Activated CD4-positive, alpha-beta T cell treated with anti-CD3 and anti-CD28 coated beads for 36 hours (primary cell): ENCODE measurements at regions of chr5 and their contacts with region 1.

Region 1: DNA sequence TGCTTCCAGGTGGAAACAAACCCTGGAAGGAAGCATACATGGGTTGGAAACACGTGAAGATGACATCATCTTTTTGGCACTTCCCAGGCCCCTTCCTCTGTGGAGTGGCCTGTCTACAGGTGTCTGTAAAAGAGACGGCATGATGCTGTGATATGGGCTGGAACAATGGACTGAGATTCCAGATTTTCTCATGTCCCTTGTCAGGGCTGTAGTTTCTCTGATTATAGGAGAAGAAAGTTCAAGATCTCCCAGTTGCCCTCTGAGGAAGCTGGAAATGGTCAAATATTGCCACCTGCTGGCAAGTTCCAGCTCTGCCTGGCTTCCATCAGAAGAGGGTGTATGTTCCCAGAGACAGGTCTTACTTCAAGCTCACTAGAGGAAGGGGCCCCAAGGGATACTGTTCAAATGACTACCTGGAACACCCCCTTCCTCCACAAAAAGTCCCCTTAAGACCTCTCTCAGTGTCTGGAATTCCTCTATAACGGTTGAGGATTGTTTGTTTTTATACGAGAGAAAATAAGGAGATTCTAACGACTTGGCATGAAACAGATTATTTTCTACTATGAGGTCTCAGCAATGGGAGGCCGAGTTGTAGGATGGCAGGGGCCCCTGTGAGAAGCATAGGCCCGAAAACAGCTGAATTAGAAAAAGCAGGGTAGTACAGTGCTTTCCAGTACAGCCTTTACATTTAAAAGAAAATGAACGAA is 7.3 kb upstream of the ANXA6 start:
- DNase-seq: peak; percentile 88
- ATAC-seq: peak; percentile 98
- H3K4me3 Mint-ChIP-seq: no peak overlapping the region
- H3K27ac Mint-ChIP-seq: no peak overlapping the region
- H3K4me1 Mint-ChIP-seq: peaks cover 14% of the 10 kb centered on the region
- H3K27me3 Mint-ChIP-seq: no peaks in the 10 kb centered on the region

Region 2: GRCh38 chr5:150560401-150561193 is 604.2 kb before region 1 on chr5:
- CTCF ChIA-PET with region 1: no interaction called
- POLR2A ChIA-PET with region 1: no interaction called
- intact Hi-C with region 1: loop called in 1 of 2 experiments (anchors 2 kb)
- DNase-seq: peak; percentile 92
- ATAC-seq: peak; percentile 97
- H3K4me3 Mint-ChIP-seq: no peak overlapping the region
- H3K27ac Mint-ChIP-seq: no peak overlapping the region
- H3K4me1 Mint-ChIP-seq: no peaks in the 10 kb centered on the region
- H3K27me3 Mint-ChIP-seq: no peaks in the 10 kb centered on the region

Region 3: GRCh38 chr5:151002250-151002649 is 162.6 kb before region 1 on chr5:
- CTCF ChIA-PET with region 1: interaction called, 14 read pairs
- POLR2A ChIA-PET with region 1: no interaction called
- intact Hi-C with region 1: loop called in 1 of 2 experiments (anchors 1 kb)
- DNase-seq: no peak
- ATAC-seq: no peak
- H3K4me3 Mint-ChIP-seq: no peak overlapping the region
- H3K27ac Mint-ChIP-seq: no peak overlapping the region
- H3K4me1 Mint-ChIP-seq: no peaks in the 10 kb centered on the region
- H3K27me3 Mint-ChIP-seq: peaks cover 2% of the 10 kb centered on the region

Region 4: DNA sequence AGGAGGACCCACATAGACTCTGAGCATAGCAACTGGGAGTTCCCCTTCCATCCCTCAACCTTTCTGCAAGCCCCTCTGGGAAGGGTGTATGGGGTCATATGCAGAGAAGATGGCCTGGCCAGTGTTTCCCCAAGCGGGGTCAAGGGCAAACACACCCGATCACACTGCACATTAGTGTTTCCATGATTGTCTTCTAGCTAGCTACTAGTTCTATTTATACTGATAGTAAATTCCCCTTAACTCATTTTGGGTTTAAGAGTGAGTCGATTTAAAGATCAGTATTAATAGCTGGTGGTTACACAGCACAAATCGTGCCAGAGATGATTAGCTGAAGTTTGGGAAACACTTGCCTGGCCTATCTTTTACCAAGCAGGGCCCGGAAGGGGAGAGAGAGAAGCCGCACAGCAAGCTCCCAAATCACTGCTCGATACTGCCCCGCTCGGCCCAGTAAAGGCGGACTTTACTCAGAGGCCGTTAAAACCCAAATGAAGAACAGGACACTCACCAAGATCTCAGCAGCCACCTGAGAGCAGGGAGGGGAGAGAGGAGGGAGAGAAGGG is 54.6 kb before region 1 on chr5:
- CTCF ChIA-PET with region 1: interaction called, 685 read pairs
- POLR2A ChIA-PET with region 1: no interaction called
- intact Hi-C with region 1: no loop called
- DNase-seq: no peak
- ATAC-seq: peak; percentile 43
- H3K4me3 Mint-ChIP-seq: no peak overlapping the region
- H3K27ac Mint-ChIP-seq: peak overlapping the region; percentile 52
- H3K4me1 Mint-ChIP-seq: peaks cover 2% of the 10 kb centered on the region
- H3K27me3 Mint-ChIP-seq: no peaks in the 10 kb centered on the region

Region 5: GRCh38 chr5:151150471-151151262 is 14.2 kb before region 1 on chr5:
- CTCF ChIA-PET with region 1: interaction called, 35 read pairs
- POLR2A ChIA-PET with region 1: interaction called, 3 read pairs
- intact Hi-C with region 1: no loop called
- DNase-seq: peak; percentile 87
- ATAC-seq: peak; percentile 64
- H3K4me3 Mint-ChIP-seq: peak overlapping the region; percentile 46
- H3K27ac Mint-ChIP-seq: peak overlapping the region; percentile 89
- H3K4me1 Mint-ChIP-seq: peaks cover 94% of the 10 kb centered on the region
- H3K27me3 Mint-ChIP-seq: no peaks in the 10 kb centered on the region

Region 6: GRCh38 chr5:151223469-151224264 is 58.8 kb after region 1 on chr5 and contains the start of gene CCDC69:
- CTCF ChIA-PET with region 1: interaction called, 16 read pairs
- POLR2A ChIA-PET with region 1: no interaction called
- intact Hi-C with region 1: no loop called
- DNase-seq: peak; percentile 75
- ATAC-seq: peak; percentile 50
- H3K4me3 Mint-ChIP-seq: peak within 1 kb of the TSS; percentile 87
- H3K27ac Mint-ChIP-seq: peak within 1 kb of the TSS; percentile 94
- H3K4me1 Mint-ChIP-seq: peaks cover 57% of the 10 kb centered on the region
- H3K27me3 Mint-ChIP-seq: no peaks in the 10 kb centered on the region
- total RNA-seq, gene CCDC69: 24.8 to 26.9 TPM